ENCODE measurements at regions of chr4 and their contacts with region 1.

Region 1: DNA sequence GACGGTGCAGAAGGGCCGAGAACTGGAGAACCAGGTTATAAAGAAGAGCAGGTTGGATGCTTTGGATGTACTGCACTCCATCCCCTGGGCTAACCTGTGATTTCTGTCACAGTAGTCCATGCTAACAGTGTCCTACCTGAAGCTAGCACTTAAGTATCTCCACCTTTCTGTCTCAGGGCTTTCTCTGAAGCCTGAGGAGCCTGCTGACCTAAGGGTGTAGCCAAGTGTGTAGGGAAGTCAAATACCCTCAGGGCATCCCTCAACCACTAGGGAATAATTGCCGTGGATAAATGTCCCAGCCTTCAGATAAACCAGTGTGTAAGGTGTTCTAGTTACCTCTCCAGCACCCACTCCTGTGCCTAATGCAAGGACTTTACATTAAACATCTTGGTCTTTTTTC is 1041.7 kb downstream of the PCDH7 start:
- DNase-seq: no peak
- H3K4me3 ChIP-seq: no peak overlapping the region
- H3K27ac ChIP-seq: no peak overlapping the region
- H3K4me1 ChIP-seq: no peaks in the 10 kb centered on the region
- H3K27me3 ChIP-seq: no peaks in the 10 kb centered on the region
- CTCF ChIP-seq: no peak
- EP300 ChIP-seq: no peak
- POLR2A ChIP-seq: no peak

Region 2: DNA sequence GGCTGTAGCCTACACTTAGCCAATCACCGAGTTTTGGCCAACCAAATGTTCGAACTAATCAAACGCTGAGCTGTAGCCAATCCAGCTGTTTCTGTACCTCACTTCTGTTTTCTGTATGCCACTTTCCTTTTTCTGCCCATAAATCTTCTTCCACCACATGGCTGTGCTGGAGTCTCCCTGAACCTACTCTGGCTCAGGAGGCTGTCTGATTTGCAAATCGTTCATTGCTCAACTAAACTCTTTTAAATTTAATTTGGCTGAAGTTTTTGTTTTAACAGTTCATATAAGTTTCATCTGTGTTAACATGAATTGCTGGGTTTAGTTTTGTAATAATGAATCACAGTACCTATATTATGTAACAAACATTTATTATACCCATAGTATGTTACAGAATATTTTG is 1202.4 kb before region 1 on chr4:
- intact Hi-C with region 1: loop called (anchors 5 kb)
- DNase-seq: no peak
- H3K4me3 ChIP-seq: no peak overlapping the region
- H3K27ac ChIP-seq: no peak overlapping the region
- H3K4me1 ChIP-seq: no peaks in the 10 kb centered on the region
- H3K27me3 ChIP-seq: no peaks in the 10 kb centered on the region
- CTCF ChIP-seq: no peak
- EP300 ChIP-seq: no peak
- POLR2A ChIP-seq: no peak